ENCODE measurements at regions of chr17 and their contacts with region 1.

Region 1: GRCh38 chr17:49227436-49228261 is 2.9 kb downstream of the PHOSPHO1 start:
- DNase-seq: peak; percentile 78
- ATAC-seq: peak; percentile 54 to 60
- H3K4me3 ChIP-seq: no peak overlapping the region
- H3K27ac ChIP-seq: no peak overlapping the region
- H3K4me1 ChIP-seq: peaks cover 45% of the 10 kb centered on the region
- H3K27me3 ChIP-seq: peaks cover 37% of the 10 kb centered on the region
- CTCF ChIP-seq: peak; percentile 85

Region 2: DNA sequence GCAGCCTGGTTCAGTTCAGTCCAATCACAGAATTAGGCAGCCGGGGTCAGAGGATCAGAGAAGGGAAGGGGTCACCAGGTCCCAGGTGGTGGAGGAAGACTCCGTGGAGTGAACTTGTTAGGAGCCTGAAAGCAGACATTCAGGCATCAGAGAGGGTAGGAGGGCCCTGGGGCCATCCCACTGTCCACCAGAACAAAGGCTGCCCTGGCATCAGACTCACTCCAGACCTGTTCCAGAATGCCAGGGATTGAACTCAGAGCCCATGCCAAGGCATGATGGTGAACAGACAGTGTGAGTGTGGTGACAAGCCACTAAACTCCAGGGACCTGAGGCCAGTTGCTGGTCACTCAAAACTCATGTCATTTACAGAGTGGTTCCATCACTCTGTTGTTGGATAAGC is 57.4 kb before region 1 on chr17:
- intact Hi-C with region 1: loop called (anchors 10 kb)
- DNase-seq: no peak
- ATAC-seq: no peak
- H3K4me3 ChIP-seq: no peak overlapping the region
- H3K27ac ChIP-seq: no peak overlapping the region
- H3K4me1 ChIP-seq: no peaks in the 10 kb centered on the region
- H3K27me3 ChIP-seq: peaks cover 24% of the 10 kb centered on the region
- CTCF ChIP-seq: no peak

Region 3: DNA sequence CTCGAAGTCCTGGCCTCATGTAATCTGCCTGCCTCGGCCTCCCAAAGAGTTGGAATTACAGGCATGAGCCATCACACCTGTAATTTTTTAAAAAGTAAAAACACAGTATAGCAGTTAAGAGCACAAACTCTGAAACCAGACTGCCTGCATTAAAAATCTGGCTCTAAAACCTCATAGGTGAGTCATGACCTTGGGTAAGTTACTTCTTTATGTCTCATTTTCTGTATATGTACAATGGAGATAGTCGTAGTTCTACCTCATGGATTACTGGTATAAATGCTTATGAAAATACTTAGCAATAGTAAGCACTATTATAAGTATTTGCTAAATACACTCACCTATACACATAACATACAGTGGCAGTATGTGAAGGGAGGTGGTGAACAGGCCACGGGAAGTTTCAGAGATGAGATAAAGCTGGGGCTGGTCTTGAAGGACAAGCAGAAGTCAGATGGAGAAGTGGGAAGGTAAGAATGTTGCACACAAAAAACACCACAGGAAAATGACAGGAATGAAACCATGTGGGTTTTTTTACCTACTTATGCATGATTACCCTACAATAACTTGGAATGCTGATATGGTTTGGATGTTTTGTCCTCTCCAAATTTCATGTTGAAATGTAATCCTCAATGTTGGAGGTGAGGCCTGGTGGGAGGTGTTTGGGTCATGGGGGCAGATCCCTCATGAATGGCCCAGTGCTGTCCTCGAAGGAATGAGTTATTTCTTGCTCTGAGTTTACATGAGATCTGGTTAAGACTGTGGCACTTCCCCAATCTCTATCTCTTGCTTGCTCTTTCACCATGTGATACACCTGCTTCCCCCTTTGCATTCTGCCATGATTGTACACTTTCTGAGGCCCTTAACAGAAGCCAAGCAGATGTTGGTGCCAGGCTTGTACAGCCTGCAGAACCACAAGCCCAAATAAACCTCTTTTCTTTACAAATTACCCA is 100.5 kb after region 1 on chr17:
- intact Hi-C with region 1: no loop called
- DNase-seq: no peak
- ATAC-seq: peak in 1 of 2 donors; percentile 55
- H3K4me3 ChIP-seq: no peak overlapping the region
- H3K27ac ChIP-seq: no peak overlapping the region
- H3K4me1 ChIP-seq: peaks cover 6% of the 10 kb centered on the region
- H3K27me3 ChIP-seq: no peaks in the 10 kb centered on the region
- CTCF ChIP-seq: no peak

Region 4: GRCh38 chr17:49515196-49515770 is 287.6 kb after region 1 on chr17:
- intact Hi-C with region 1: no loop called
- DNase-seq: peak; percentile 82
- ATAC-seq: peak; percentile 92 to 94
- H3K4me3 ChIP-seq: no peak overlapping the region
- H3K27ac ChIP-seq: peak overlapping the region; percentile 69
- H3K4me1 ChIP-seq: peaks cover 21% of the 10 kb centered on the region
- H3K27me3 ChIP-seq: peaks cover 19% of the 10 kb centered on the region
- CTCF ChIP-seq: no peak

Measured in lower lobe of right lung (tissue), 2 donors.